Activated CD4-positive, alpha-beta memory T cell treated with anti-CD3 and anti-CD28 coated beads, Interleukin-2, amount 10 ng/mL, durations not matched to agents 7 days and 5 days (primary cell): ENCODE measurements at regions of chr12 and their contacts with region 1.

Region 1: DNA sequence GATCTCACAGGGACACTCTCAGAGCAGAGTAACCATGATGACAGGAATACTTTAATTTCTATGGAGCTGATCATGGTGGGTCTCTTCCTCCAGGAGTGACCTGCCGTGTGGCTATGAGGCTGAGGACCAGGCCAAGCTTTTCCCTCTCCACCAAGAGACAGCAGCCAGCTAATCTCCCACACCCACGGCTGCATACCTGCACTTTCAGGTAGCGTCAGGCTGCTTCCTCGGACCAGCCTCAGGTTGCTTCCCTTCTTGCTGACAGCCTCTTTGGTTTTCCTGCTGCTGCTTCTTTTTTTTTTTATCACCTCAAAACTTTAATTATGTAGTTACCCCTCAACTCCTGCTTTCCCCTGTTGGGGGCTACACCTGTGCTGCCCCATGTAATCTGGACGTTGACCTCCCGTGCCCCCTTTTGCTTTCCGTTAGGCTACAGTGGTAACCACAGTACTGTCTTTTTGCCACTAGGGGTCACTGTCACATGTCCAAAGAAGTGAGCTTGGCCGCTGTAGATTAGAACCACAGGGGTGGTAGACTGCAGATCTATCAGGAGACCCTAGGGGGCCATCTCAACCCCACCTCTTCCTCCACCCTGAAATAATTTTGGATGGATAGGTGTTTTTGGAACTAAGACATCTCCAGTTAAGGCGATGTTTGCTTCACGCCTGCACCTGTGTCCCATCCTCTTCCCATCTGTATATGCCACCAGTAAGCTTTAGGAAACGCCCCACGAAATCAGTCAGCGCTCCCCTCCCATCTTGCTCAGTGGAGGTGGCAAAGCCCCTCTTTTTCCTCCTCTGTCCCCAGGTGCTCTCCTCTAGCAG is 7.8 kb upstream of the PIP4K2C start:
- DNase-seq: peak; percentile 72
- H3K4me3 Mint-ChIP-seq: no peak overlapping the region
- H3K27ac Mint-ChIP-seq: no peak overlapping the region
- H3K4me1 Mint-ChIP-seq: peaks cover 5% of the 10 kb centered on the region
- H3K27me3 Mint-ChIP-seq: peaks cover 1% of the 10 kb centered on the region

Region 2: GRCh38 chr12:57546438-57547383 is 36.5 kb before region 1 on chr12 and contains the start of gene DCTN2:
- CTCF ChIA-PET with region 1: interaction called, 14 read pairs
- POLR2A ChIA-PET with region 1: no interaction called
- DNase-seq: peak; percentile 97
- H3K4me3 Mint-ChIP-seq: peak within 1 kb of the TSS; percentile 99
- H3K27ac Mint-ChIP-seq: peak within 1 kb of the TSS; percentile 91
- H3K4me1 Mint-ChIP-seq: peaks cover 60% of the 10 kb centered on the region
- H3K27me3 Mint-ChIP-seq: peaks cover 20% of the 10 kb centered on the region
- total RNA-seq, gene DCTN2: 80.9 to 85.1 TPM

Region 3: GRCh38 chr12:57604454-57604991 is 21.3 kb after region 1 on chr12 and contains the start of gene DTX3:
- CTCF ChIA-PET with region 1: interaction called, 23 read pairs
- POLR2A ChIA-PET with region 1: no interaction called
- DNase-seq: peak; percentile 54
- H3K4me3 Mint-ChIP-seq: peak within 1 kb of the TSS; percentile 77
- H3K27ac Mint-ChIP-seq: peak within 1 kb of the TSS; percentile 70
- H3K4me1 Mint-ChIP-seq: peaks cover 18% of the 10 kb centered on the region
- H3K27me3 Mint-ChIP-seq: no peaks in the 10 kb centered on the region
- total RNA-seq, gene DTX3: 19.3 to 21.8 TPM

Region 4: GRCh38 chr12:57621497-57622292 is 38.5 kb after region 1 on chr12:
- CTCF ChIA-PET with region 1: interaction called, 77 read pairs
- POLR2A ChIA-PET with region 1: interaction called, 4 read pairs
- DNase-seq: peak; percentile 62
- H3K4me3 Mint-ChIP-seq: peak overlapping the region; percentile 50
- H3K27ac Mint-ChIP-seq: no peak overlapping the region
- H3K4me1 Mint-ChIP-seq: peaks cover 24% of the 10 kb centered on the region
- H3K27me3 Mint-ChIP-seq: peaks cover 99% of the 10 kb centered on the region

Region 5: DNA sequence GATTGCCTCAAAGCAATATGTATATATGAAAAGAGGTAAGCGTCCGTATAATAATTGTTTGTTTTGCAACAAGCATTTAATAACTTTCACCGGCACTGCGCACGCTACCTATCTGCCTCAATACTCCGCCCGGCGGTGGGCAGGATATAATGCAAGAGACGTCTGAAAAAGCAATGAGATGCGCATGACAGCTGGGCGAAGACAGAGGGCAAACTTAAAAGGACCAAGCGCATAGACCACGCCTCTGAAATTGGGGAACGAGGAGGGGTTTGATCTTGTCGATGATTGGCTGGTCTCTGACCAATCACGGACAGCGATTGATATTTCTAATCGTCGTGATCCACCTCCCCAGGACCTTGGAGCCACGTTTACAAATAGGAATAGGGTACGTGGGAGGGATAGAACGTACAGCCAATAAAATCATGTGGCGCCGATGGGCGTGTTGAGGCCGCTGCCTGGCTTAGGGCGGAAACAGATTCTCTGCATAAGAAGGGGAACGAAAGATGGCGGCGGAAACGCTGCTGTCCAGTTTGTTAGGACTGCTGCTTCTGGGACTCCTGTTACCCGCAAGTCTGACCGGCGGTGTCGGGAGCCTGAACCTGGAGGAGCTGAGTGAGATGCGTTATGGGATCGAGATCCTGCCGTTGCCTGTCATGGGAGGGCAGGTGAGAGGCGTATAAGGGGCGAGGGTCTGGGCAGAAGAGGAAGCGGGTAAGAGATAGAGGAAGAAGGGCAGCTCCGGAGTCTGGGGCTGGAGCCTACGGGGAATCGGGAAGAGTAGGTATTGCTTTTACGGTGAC is 110.6 kb after region 1 on chr12 and contains the start of gene OS9:
- CTCF ChIA-PET with region 1: interaction called, 16 read pairs
- POLR2A ChIA-PET with region 1: interaction called, 3 read pairs
- DNase-seq: peak; percentile 96
- H3K4me3 Mint-ChIP-seq: no peak within 1 kb of the TSS
- H3K27ac Mint-ChIP-seq: no peak within 1 kb of the TSS
- H3K4me1 Mint-ChIP-seq: peaks cover 7% of the 10 kb centered on the region
- H3K27me3 Mint-ChIP-seq: peaks cover 13% of the 10 kb centered on the region
- total RNA-seq, gene OS9: 146 to 152 TPM